HCT116 (cell line): ENCODE measurements at regions of chr19 and their contacts with region 1.

Region 1: GRCh38 chr19:54297760-54298305 is 15.1 kb downstream of the LILRA5 start:
- DNase-seq: peak; percentile 3
- ATAC-seq: peak; percentile 59
- H3K4me3 ChIP-seq: no peak overlapping the region
- H3K27ac ChIP-seq: no peak overlapping the region
- H3K4me1 ChIP-seq: no peaks in the 10 kb centered on the region
- H3K27me3 ChIP-seq: peaks cover 54% of the 10 kb centered on the region
- CTCF ChIP-seq: peak in 2 of 3 experiments; percentile 19 to 32; a peak in 3 of 6 replicates
- POLR2A ChIP-seq: no peak
- RAD21 ChIP-seq: peak; percentile 42

Region 2: GRCh38 chr19:54203151-54203611 is 94.7 kb before region 1 on chr19:
- CTCF ChIA-PET with region 1: no interaction called
- POLR2A ChIA-PET with region 1: no interaction called
- RAD21 ChIA-PET with region 1: no interaction called
- intact Hi-C with region 1: no loop called
- DNase-seq: no peak
- ATAC-seq: no peak
- H3K4me3 ChIP-seq: 0 out of 4 replicates have a peak overlapping the region, but pooled peaks of 1 of the 2 experiments have one; percentile 8
- H3K27ac ChIP-seq: no peak overlapping the region
- H3K4me1 ChIP-seq: peaks cover 9 to 51% of the 10 kb centered on the region in 2 experiments
- H3K27me3 ChIP-seq: no peaks in the 10 kb centered on the region
- CTCF ChIP-seq: no peak
- POLR2A ChIP-seq: no peak
- RAD21 ChIP-seq: no peak

Region 3: DNA sequence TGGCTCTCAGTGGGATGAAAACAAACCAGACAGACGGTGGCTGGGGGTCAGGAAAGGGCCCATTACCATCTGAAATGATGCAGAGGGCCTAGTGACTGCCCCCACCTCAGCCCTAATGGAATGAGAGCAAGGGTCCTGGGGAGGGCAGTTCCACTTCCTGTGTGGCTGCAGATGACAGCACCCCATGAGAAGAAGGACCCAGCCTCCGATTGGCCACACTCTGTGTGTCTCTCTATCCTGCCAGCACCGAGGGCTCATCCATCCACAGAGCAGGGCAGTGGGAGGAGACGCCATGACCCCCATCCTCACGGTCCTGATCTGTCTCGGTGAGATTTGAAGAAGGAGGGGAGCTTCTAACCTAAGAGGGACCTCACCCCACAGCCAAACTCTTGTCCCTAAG is 332.9 kb after region 1 on chr19:
- CTCF ChIA-PET with region 1: no interaction called
- POLR2A ChIA-PET with region 1: no interaction called
- RAD21 ChIA-PET with region 1: no interaction called
- intact Hi-C with region 1: loop called (anchors 5 kb)
- DNase-seq: no peak
- ATAC-seq: no peak
- H3K4me3 ChIP-seq: no peak overlapping the region
- H3K27ac ChIP-seq: no peak overlapping the region
- H3K4me1 ChIP-seq: no peaks in the 10 kb centered on the region
- H3K27me3 ChIP-seq: peaks cover 33% of the 10 kb centered on the region
- CTCF ChIP-seq: no peak
- POLR2A ChIP-seq: no peak
- RAD21 ChIP-seq: no peak